ENCODE measurements at regions of chr1 and their contacts with region 1.

Region 1: DNA sequence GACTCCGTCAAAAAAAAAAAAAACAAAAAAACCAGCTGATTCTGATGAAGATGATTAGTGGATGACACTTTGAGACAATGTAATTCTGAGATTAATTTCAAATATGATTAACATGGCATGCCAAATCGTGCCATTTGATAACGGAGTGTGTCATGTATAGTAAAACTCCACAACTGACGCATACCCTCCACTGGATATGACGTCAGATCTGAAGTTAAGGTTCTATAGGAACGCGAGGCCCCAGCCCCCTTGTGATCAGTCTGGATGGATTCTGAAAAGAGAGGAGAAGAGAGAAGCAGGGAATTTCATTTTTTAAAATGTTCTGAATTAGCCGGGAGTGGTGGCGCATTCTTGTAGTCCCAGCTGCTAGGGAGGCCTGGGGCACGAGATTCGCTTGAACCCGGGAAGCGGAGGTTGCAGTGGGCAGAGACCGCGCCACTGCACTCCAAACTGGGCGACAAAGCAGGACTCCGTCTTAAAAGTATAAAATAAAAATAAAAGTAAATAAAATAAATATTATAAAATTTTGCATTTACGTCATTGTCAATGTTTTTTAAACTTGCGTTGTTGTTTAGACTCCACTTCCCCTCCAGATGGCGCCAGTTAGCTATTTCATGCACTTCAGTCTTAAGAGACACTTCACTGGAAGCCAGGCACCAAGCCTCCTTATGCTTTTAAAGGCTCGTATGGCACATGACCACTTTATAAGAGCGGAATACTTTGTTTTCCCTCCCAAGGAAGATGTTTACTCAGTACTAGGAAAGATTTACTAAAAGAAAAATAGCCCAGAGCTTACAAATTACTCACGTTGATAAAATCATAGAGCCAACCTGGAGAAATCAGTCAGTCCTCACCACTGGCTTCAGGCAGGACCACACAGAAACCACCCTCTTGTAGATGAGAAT is 65.5 kb downstream of the UBE2U start:
- DNase-seq: peak in 1 of 2 donors; percentile 72
- H3K4me3 ChIP-seq: no peak overlapping the region
- H3K27ac ChIP-seq: no peak overlapping the region
- H3K4me1 ChIP-seq: no peaks in the 10 kb centered on the region
- H3K27me3 ChIP-seq: no peaks in the 10 kb centered on the region
- CTCF ChIP-seq: peak; percentile 62 to 81 (median 79)

Region 2: GRCh38 chr1:64242895-64243756 is 25.8 kb before region 1 on chr1:
- intact Hi-C with region 1: no loop called
- DNase-seq: no peak
- H3K4me3 ChIP-seq: peak overlapping the region in 1 of 2 donors; percentile 4
- H3K27ac ChIP-seq: no peak overlapping the region
- H3K4me1 ChIP-seq: peaks cover 0 to 7% of the 10 kb centered on the region in 2 donors
- H3K27me3 ChIP-seq: no peaks in the 10 kb centered on the region
- CTCF ChIP-seq: peak; percentile 43 to 58 (median 44)

Region 3: DNA sequence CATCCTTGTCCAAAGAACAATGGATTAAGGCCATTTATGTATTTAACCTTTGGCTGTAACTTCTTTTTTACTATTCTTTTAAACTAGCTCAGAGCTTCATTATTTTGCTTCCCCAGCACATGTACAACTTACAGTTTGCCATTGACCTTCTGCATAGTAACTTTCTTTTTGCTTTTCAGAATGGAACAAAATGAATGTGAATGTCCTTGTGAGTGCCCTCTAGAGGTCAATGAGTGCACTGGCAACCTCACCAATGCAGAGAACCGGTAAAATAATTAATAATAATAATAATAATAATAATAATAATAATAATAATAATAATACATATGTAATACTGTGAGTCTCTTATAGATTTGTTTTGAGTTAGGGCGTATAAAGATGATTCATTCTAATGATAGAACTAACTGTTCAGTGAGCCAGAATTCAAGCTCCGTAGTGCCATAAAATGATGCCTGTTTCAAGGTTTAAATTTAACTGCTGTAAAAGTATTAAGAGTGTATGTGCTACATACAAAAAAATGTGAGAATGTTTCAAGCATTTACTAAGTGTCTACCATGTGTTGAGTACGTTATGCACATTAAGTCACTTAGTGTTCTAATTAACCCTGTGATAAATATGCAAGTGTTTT is 406.9 kb after region 1 on chr1:
- intact Hi-C with region 1: loop called (anchors 1 kb)
- DNase-seq: no peak
- H3K4me3 ChIP-seq: no peak overlapping the region
- H3K27ac ChIP-seq: no peak overlapping the region
- H3K4me1 ChIP-seq: no peaks in the 10 kb centered on the region
- H3K27me3 ChIP-seq: no peaks in the 10 kb centered on the region
- CTCF ChIP-seq: peak; percentile 17 to 76 (median 69)

Measured in ascending aorta (tissue), 2 donors.